ENCODE measurements at regions of chr9 and their contacts with region 1.

Region 1: DNA sequence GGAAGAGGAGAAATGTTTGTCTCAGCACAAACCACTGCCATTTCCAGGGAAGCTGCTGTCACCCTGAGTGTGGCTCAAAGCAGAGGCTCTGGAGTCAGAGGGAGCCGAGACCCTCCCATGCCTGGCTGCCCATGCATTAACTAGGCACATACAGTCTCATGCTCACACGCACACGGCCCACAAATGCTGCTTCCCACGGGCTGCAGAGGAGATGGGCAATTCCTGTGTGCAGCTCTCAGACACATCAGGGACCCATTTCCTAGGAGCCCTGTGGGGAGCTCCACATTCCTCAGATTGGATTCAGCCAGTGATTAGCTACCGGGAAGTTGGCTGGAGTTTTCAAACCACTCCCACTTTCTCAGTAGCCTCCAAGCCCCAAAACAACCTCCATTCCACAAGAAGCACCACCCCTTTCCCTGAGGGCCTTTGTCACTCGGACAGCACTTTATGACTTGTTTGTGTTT is 9.1 kb upstream of the PTGES start:
- DNase-seq: peak in 1 of 3 donors; percentile 46
- H3K4me3 ChIP-seq: peak overlapping the region in 1 of 3 experiments; percentile 3
- H3K4me3 Mint-ChIP-seq: peak overlapping the region; percentile 46 to 48
- H3K27ac ChIP-seq: peak overlapping the region; percentile 71 to 85
- H3K27ac Mint-ChIP-seq: peak overlapping the region; percentile 96 to 99 (median 98)
- H3K4me1 ChIP-seq: peaks cover 36 to 55% of the 10 kb centered on the region in 2 donors
- H3K4me1 Mint-ChIP-seq: peaks cover 55% of the 10 kb centered on the region
- H3K27me3 ChIP-seq: no peaks in the 10 kb centered on the region
- H3K27me3 Mint-ChIP-seq: peaks cover 1 to 19% (median 3%) of the 10 kb centered on the region in 3 donors
- CTCF ChIP-seq: no peak

Region 2: DNA sequence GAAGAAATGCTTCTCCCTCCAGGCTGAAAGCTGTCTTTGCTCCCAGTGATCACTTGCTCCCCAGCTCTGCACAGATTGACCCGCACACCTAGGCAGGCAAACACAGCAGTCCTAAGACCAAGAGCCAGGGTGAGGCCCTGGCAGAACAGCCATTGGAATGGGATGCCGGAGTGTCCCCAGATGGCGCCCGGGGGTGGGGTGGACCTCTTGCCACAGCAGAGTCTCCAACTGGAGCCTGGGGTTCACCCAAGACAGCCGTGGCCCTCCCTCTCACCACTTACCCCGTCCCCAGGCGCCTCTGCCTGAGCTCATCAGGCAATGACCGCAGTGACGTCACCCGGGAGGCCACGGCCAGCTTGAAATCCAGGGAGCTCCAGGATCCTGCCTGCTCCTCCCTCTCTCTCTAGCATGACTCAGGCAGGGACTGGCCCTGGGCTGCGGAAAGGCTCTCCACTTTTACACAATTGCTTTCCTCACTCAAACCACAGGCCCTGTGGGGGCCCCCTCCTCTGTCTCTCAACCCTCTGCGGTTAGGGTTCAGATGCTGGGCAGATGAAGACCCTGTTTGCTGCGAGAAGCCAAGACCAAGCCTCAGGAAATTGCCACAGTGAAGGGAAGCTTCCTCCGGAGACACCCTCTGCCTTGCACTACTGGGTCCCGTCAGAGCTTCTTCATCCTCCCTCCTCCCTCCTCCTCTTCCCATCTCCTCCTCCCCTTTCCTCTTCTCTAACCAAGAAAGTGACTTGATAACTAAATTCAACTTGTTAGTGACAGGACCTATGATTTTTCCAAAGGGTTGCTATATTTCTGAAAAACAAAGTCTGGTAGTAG is 15.2 kb after region 1 on chr9:
- intact Hi-C with region 1: loop called (anchors 1 to 2 kb)
- DNase-seq: peak; percentile 100
- H3K4me3 ChIP-seq: peak overlapping the region in 1 of 3 experiments; percentile 57
- H3K4me3 Mint-ChIP-seq: peak overlapping the region; percentile 71 to 83
- H3K27ac ChIP-seq: peak overlapping the region; percentile 61 to 81
- H3K27ac Mint-ChIP-seq: peak overlapping the region; percentile 95 to 99 (median 97)
- H3K4me1 ChIP-seq: peaks cover 75 to 83% of the 10 kb centered on the region in 2 donors
- H3K4me1 Mint-ChIP-seq: peaks cover 82% of the 10 kb centered on the region
- H3K27me3 ChIP-seq: no peaks in the 10 kb centered on the region
- H3K27me3 Mint-ChIP-seq: peaks cover 10 to 15% (median 10%) of the 10 kb centered on the region in 3 donors
- CTCF ChIP-seq: no peak